ENCODE measurements at regions of chr6 and their contacts with region 1.

Region 1: DNA sequence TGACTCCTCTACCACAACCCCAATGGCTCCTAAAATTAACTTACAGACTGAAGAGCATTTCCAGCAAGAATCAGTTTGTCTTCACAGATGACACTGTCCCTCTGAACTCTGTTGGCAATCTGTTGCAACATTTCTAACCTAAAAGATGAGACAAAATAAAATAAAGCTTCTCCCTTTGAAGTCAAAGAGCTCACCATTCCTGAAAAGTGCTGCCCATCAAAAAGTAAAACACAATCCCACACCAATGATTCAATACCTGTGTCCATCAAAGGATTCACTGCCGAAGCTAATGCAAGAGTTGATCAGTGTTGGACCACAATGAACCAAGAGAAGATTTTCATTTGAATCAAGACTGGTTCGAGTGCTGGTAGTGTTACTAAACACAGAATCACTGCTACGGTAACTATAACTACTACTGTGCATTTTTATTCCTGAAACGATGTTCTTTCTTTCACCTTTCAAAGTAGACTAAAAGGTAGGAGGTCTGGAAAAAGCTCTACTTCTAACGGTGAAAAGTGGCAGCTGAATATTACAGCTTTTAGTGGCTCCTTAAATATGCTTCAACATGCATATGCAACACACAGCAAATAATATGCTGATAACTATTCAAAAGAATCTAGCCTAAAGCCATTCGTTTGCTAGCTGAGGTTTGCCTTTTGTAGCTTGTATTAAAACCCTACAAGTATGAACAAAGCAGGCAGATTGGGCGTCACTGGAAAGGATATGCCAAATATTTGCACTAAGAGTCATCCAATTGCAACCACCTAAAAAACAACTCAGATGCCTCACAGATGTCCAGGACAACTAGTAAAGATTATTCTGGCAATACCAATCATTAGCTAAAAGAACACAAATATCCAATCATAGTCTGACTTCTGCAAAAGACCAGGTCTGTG is at the start of gene DST:
- DNase-seq: no peak
- ATAC-seq: no peak
- H3K4me3 ChIP-seq: no peak within 1 kb of the TSS
- H3K4me3 Mint-ChIP-seq: no peak within 1 kb of the TSS
- H3K27ac ChIP-seq: no peak within 1 kb of the TSS
- H3K27ac Mint-ChIP-seq: no peak within 1 kb of the TSS
- H3K4me1 ChIP-seq: no peaks in the 10 kb centered on the region
- H3K4me1 Mint-ChIP-seq: no peaks in the 10 kb centered on the region
- H3K27me3 ChIP-seq: no peaks in the 10 kb centered on the region
- H3K27me3 Mint-ChIP-seq: no peaks in the 10 kb centered on the region
- total RNA-seq, gene DST: 3.1 to 12.1 (median 7.4) TPM

Region 2: GRCh38 chr6:56009636-56010035 is 633.0 kb before region 1 on chr6:
- CTCF ChIA-PET with region 1: no interaction called
- POLR2A ChIA-PET with region 1: no interaction called
- DNase-seq: no peak
- ATAC-seq: no peak
- H3K4me3 ChIP-seq: no peak overlapping the region
- H3K4me3 Mint-ChIP-seq: no peak overlapping the region
- H3K27ac ChIP-seq: no peak overlapping the region
- H3K27ac Mint-ChIP-seq: no peak overlapping the region
- H3K4me1 ChIP-seq: no peaks in the 10 kb centered on the region
- H3K4me1 Mint-ChIP-seq: no peaks in the 10 kb centered on the region
- H3K27me3 ChIP-seq: no peaks in the 10 kb centered on the region
- H3K27me3 Mint-ChIP-seq: no peaks in the 10 kb centered on the region

Region 3: GRCh38 chr6:56604186-56604585 is 38.4 kb before region 1 on chr6:
- CTCF ChIA-PET with region 1: no interaction called
- POLR2A ChIA-PET with region 1: no interaction called
- DNase-seq: no peak
- ATAC-seq: no peak
- H3K4me3 ChIP-seq: no peak overlapping the region
- H3K4me3 Mint-ChIP-seq: no peak overlapping the region
- H3K27ac ChIP-seq: no peak overlapping the region
- H3K27ac Mint-ChIP-seq: no peak overlapping the region
- H3K4me1 ChIP-seq: no peaks in the 10 kb centered on the region
- H3K4me1 Mint-ChIP-seq: no peaks in the 10 kb centered on the region
- H3K27me3 ChIP-seq: no peaks in the 10 kb centered on the region
- H3K27me3 Mint-ChIP-seq: peaks cover 7 to 11% of the 10 kb centered on the region in 2 donors

Region 4: GRCh38 chr6:56669028-56669427 is 26.4 kb after region 1 on chr6:
- CTCF ChIA-PET with region 1: no interaction called
- POLR2A ChIA-PET with region 1: interaction called in 1 of 2 experiments, 10 read pairs
- DNase-seq: no peak
- ATAC-seq: no peak
- H3K4me3 ChIP-seq: no peak overlapping the region
- H3K4me3 Mint-ChIP-seq: no peak overlapping the region
- H3K27ac ChIP-seq: no peak overlapping the region
- H3K27ac Mint-ChIP-seq: no peak overlapping the region
- H3K4me1 ChIP-seq: peaks cover 0 to 3% of the 10 kb centered on the region in 2 experiments
- H3K4me1 Mint-ChIP-seq: no peaks in the 10 kb centered on the region
- H3K27me3 ChIP-seq: peaks cover 0 to 2% of the 10 kb centered on the region in 2 experiments
- H3K27me3 Mint-ChIP-seq: no peaks in the 10 kb centered on the region

Measured in T-cell (primary cell).